Activated naive CD4-positive, alpha-beta T cell treated with anti-CD3 and anti-CD28 coated beads for 36 hours (primary cell): ENCODE measurements at regions of chr13 and their contacts with region 1.

Region 1: GRCh38 chr13:39602614-39603366 is at the start of gene LHFPL6:
- DNase-seq: peak; percentile 85
- H3K4me3 Mint-ChIP-seq: peak within 1 kb of the TSS; percentile 73
- H3K27ac Mint-ChIP-seq: no peak within 1 kb of the TSS
- H3K4me1 Mint-ChIP-seq: peaks cover 11% of the 10 kb centered on the region
- H3K27me3 Mint-ChIP-seq: peaks cover 41% of the 10 kb centered on the region
- total RNA-seq, gene LHFPL6: 1.2 to 1.5 TPM

Region 2: GRCh38 chr13:39655569-39656324 is 53.0 kb after region 1 on chr13 and contains the start of gene COG6:
- CTCF ChIA-PET with region 1: no interaction called
- intact Hi-C with region 1: loop called (anchors 1 kb)
- DNase-seq: peak; percentile 93
- H3K4me3 Mint-ChIP-seq: peak within 1 kb of the TSS; percentile 92
- H3K27ac Mint-ChIP-seq: peak within 1 kb of the TSS; percentile 74
- H3K4me1 Mint-ChIP-seq: peaks cover 27% of the 10 kb centered on the region
- H3K27me3 Mint-ChIP-seq: peaks cover 2% of the 10 kb centered on the region
- total RNA-seq, gene COG6: 21.2 to 28.3 TPM